GM13976 (cell line): ENCODE measurements at regions of chr12 and their contacts with region 1.

Region 1: DNA sequence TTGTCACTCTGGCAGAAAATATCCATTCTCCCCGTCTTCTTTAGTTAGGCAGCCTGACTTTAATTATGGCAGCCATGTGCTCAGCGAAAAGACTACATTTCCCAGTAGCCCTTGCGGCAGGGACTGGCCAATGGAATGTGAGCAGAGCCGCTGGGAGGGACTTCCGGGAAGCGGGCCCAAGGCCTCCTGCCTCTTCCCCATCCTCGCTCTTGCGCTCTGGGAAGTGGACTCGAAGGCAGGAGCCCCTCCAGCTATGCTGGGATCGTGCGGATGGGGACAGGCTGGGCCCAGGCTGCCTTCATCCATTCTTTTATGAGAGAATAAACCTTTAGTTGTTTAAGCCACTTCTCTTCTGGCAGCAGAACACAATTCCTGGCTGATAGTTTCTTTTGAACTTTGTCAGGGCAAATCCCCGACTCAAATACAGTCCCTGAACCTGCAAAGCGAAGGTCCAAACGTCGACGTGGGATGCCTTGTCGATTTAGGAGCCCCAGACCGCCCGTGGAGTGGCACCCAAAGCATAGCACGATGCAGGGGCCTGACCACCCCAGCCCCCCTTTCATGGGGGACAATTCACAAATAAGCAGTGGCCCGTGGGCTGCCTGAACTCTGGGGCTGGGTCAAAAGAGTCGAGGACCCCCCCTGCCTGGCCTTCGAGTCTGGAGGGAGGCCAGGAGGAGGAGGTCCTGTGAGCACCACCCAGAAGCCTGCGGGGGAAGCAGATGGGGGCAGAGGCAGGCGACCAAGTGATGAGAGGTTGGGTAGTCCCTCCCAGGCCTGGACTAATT is 15.6 kb upstream of the LRTM2 start:
- DNase-seq: peak; percentile 94
- CTCF ChIP-seq: no peak

Region 2: DNA sequence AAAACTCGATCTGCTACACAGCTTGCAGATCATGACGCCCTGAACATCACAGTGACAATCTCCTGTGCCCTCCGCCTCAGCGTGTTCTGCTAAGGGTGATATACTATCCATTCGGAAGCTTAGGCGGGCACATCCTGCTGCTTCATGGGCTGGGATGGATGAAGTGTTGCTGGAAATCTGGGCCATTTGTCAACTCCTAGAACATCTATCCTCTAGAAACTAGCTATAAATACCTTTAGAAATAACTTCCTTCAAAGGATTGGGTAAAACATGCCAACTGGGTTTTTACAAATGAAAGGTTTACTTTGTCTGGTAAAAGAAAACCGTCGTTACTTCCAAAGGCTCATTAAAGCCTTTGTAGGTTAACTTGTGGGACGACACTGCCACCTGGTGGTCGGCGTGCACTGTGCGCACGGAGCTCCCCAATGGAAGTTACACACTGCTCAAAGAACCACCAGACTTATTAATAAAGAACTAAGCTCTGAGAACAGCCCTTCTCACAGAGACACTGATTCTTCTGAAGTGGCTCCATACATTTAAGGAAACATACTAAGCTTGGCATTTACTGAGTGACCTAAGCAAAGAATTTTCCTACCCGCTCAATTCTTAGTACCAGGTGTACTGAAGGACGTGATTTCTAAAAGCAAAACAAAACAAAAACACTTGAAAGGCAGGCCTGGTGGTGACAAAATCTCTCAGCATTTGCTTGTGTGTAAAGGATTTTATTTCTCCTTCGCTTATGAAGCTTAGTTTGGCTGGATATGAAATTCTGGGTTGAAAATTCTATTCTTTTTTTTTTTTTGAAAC is 135.3 kb after region 1 on chr12:
- in situ Hi-C with region 1: loop called (anchors 5 kb)
- DNase-seq: peak; percentile 84
- CTCF ChIP-seq: peak; percentile 94

Region 3: GRCh38 chr12:2034633-2035430 is 230.1 kb after region 1 on chr12:
- in situ Hi-C with region 1: loop called (anchors 25 kb)
- DNase-seq: peak; percentile 94
- CTCF ChIP-seq: peak; percentile 96

Region 4: GRCh38 chr12:2301531-2302461 is 497.1 kb after region 1 on chr12:
- in situ Hi-C with region 1: no loop called
- DNase-seq: no peak
- CTCF ChIP-seq: no peak